Right ventricle myocardium superior (tissue), 1 donor: ENCODE measurements at regions of chr2 and their contacts with region 1.

Region 1: DNA sequence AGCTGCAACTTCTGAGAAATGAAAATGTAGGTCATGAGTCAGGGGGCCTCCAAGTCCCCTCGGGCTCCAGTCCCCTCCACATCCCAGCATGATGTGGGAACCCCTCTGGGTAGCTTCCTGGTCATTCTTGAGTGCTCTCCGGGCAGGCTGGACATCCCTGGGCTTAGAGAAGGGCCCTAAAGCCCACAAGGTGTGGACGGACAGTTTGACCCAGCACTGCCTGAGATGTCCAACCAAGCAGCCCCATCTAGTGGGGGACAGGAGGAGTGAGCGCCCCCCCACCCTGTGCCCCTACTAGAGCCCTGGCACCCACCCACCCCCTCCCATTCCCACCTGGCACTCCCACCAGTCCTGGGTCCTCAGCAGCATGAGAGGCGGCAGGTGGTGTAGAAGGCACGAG is 46.0 kb downstream of the CYP27C1 start:
- DNase-seq: no peak
- ATAC-seq: peak; percentile 38

Region 2: DNA sequence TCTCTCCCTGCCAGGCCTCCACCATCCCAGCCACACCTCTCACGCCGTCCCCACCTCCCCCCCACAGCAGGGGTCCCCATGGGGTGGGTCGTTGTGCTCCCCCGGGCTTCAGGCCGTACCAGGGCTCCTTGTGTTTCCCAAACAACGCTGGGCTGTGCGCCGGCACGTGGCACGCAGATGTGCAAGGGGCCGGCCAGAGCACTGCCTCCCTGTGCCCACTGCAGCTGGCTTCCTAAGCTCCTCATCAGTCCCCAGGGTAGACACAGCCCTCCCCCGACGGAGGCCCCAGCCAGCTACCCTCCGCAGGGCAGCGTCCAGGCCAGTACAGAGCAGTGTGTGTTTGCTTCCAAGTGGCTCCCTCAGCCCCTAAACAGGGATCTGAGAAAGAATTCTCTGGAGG is 101.2 kb before region 1 on chr2:
- intact Hi-C with region 1: loop called (anchors 10 kb)
- DNase-seq: no peak
- ATAC-seq: peak; percentile 34

Region 3: GRCh38 chr2:128145651-128146050 is 971.5 kb after region 1 on chr2:
- intact Hi-C with region 1: no loop called
- DNase-seq: no peak
- ATAC-seq: no peak